ENCODE measurements at regions of chr2 and their contacts with region 1.

Region 1: GRCh38 chr2:20642055-20642971 is 8.6 kb downstream of the HS1BP3 start:
- DNase-seq: peak; percentile 69 to 95
- ATAC-seq: peak; percentile 89 to 99
- H3K4me3 ChIP-seq: no peak overlapping the region
- H3K27ac ChIP-seq: peak overlapping the region in 1 of 2 experiments; percentile 49; a peak in 4 of 6 replicates
- H3K4me1 ChIP-seq: peaks cover 11% of the 10 kb centered on the region; the same call in 2 of the 3 replicates
- CTCF ChIP-seq: peak; percentile 96
- EP300 ChIP-seq: no peak
- POLR2A ChIP-seq: no peak
- RAD21 ChIP-seq: peak; percentile 96

Region 2: GRCh38 chr2:20080839-20081415 is 561.4 kb before region 1 on chr2:
- CTCF ChIA-PET with region 1: no interaction called
- POLR2A ChIA-PET with region 1: no interaction called
- DNase-seq: no peak
- ATAC-seq: peak in 1 of 2 experiments; percentile 47; a peak in 3 of 6 replicates
- H3K4me3 ChIP-seq: no peak overlapping the region
- H3K27ac ChIP-seq: peak overlapping the region in 1 of 2 experiments; percentile 42; a peak in 1 of 6 replicates
- H3K4me1 ChIP-seq: peaks cover 5% of the 10 kb centered on the region; the same call in 1 of the 3 replicates
- CTCF ChIP-seq: no peak
- EP300 ChIP-seq: no peak
- POLR2A ChIP-seq: no peak
- RAD21 ChIP-seq: no peak

Region 3: GRCh38 chr2:20391951-20392699 is 250.2 kb before region 1 on chr2:
- CTCF ChIA-PET with region 1: interaction called, 103 read pairs
- POLR2A ChIA-PET with region 1: no interaction called
- DNase-seq: peak; percentile 34 to 44
- ATAC-seq: peak; percentile 26 to 37; a peak in 3 of 6 replicates
- H3K4me3 ChIP-seq: no peak overlapping the region
- H3K27ac ChIP-seq: no peak overlapping the region
- H3K4me1 ChIP-seq: no peaks in the 10 kb centered on the region
- CTCF ChIP-seq: no peak
- EP300 ChIP-seq: no peak
- POLR2A ChIP-seq: no peak
- RAD21 ChIP-seq: no peak

Region 4: DNA sequence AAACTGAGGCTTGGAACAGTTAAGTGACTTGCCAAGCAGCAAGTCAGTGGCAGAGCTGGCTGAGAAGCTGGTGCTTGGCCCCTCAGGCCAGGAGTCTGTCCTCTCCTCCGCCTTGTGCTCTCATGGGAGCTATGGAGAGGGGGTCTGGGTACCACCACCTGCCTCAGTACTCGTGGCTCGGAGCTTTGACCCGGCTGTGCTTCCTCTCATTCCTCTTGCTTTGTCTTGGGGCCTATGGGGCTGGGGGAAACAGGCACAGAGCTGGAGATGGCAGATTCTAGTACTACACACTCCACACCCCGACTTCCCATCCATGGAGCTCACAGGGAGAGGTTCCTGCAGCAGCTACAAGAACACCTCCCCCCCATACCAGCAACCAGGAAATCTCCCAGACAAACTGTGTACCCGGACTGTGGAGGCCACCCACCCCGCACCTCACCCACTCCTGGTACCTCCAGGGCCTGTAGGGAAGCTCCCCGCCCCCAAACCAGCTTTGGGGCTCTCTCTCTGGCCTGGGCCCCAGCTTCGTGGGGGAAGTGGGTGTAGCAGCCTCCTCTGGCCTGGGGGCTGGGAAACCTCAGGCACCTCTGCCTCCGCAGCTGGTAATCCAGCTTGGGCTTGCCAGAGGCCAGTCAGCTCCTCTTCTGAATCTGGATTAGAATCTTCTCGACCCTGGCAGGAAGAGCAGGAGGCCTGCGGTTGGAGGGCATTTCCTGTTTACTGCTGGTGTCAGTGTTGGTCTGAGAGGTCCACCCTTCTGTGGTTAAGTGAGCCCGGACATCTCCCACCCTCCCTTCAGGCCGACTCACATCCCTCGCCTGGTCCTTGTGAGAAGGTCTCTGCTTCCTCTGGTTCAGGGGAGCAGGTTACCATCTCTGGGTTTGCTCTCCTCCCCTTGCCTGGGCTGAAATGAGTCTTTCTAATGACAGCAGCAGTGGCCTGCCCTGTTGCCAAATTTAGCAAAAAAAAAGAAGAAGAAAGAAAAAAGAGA is 217.7 kb before region 1 on chr2:
- CTCF ChIA-PET with region 1: interaction called, 109 read pairs
- POLR2A ChIA-PET with region 1: no interaction called
- DNase-seq: no peak
- ATAC-seq: 0 out of 6 replicates have a peak, but pooled peaks of 1 of the 2 experiments have one; percentile 10
- H3K4me3 ChIP-seq: no peak overlapping the region
- H3K27ac ChIP-seq: peak overlapping the region in 1 of 2 experiments; percentile 3; a peak in 1 of 6 replicates
- H3K4me1 ChIP-seq: 0 out of 3 replicates have a peak, but pooled peaks cover 2% of the 10 kb centered on the region
- CTCF ChIP-seq: no peak
- EP300 ChIP-seq: no peak
- POLR2A ChIP-seq: no peak
- RAD21 ChIP-seq: no peak

Region 5: DNA sequence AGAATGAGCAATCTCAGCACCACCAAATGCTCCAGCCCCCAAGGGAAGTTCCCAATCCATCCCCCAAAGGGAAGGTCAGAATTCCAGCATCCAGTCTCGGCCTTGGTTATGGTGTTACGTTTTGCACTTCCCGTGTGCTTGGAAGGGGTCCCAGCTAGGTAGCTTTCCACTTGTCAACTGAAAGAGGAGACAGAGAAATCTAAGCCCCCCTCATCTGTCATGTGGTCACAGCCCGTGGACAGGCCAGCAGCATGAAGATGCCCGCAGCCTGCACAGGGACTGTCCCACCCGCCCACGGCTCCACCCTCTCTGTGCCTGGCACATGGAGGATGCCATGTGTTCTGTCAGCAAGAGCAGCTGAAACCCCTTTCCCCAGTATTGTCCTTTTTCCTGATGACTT is 163.3 kb before region 1 on chr2:
- CTCF ChIA-PET with region 1: interaction called, 10 read pairs
- POLR2A ChIA-PET with region 1: no interaction called
- DNase-seq: no peak
- ATAC-seq: no peak
- H3K4me3 ChIP-seq: no peak overlapping the region
- H3K27ac ChIP-seq: no peak overlapping the region
- H3K4me1 ChIP-seq: 0 out of 3 replicates have a peak, but pooled peaks cover 4% of the 10 kb centered on the region
- CTCF ChIP-seq: no peak
- EP300 ChIP-seq: no peak
- POLR2A ChIP-seq: no peak
- RAD21 ChIP-seq: no peak

Region 6: DNA sequence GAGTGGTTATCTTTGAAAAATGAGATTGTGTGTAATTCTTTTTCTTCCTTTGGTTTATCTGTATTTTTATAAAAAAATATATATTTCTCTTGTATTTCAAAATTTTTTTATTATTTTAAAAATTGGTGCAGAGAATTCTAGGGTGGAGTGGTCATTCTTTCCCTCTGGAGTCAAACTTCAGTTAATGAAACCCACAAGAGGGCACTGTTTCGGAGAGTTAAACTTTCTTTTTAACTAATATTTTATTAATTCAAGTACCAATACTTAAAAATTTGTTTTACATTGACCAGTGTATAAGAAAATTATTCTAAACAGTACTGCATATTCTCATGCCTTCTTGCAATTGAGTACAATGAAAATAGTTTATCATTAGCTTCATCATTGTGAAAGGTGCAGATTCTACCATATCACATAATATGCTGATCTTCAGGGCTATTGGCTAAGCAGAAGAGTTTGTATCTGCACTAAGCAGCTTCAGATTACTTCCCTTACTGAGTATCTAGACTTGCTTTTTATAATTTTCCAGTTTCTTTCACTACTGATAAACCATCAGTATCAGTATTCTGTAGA is 41.5 kb before region 1 on chr2:
- CTCF ChIA-PET with region 1: interaction called, 10 read pairs
- POLR2A ChIA-PET with region 1: interaction called, 3 read pairs
- DNase-seq: no peak
- ATAC-seq: no peak
- H3K4me3 ChIP-seq: no peak overlapping the region
- H3K27ac ChIP-seq: no peak overlapping the region; a peak in 1 of 6 replicates
- H3K4me1 ChIP-seq: peaks cover 22% of the 10 kb centered on the region
- CTCF ChIP-seq: peak; percentile 66
- EP300 ChIP-seq: no peak
- POLR2A ChIP-seq: no peak
- RAD21 ChIP-seq: peak; percentile 9 to 48; a peak in 2 of 5 replicates

Measured in A549 (cell line).